Right cardiac atrium (tissue), 5 donors: ENCODE measurements at regions of chr2 and their contacts with region 1.

Region 1: DNA sequence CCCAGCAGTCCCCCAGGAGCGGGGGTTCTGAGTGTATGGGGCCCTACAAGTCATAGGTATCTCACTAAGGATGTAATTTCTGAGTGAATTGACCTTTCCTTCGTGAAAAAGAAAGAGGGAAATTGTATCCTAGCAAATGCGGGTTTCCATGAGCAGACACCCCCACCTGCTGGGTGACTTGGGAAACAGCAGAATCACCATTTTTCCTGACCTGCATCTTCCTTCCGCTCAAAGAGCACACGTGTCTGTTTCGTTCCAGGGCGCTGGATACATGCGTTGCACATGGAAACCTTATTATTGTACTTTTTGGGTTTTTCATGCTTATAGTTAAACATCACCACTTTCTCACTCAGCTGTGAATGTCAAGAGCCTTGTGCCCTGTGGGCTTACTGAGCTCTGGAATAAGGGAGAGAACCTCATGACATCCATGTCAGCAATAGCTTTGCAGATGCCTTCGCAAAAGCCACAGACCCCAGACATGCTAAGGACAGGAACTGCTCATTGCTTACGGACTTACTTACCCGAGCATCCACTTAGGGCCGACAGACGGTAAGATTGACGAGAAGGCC is 132.8 kb downstream of the TPO start:
- DNase-seq: no peak
- ATAC-seq: peak in 1 of 2 donors; percentile 22
- H3K4me3 ChIP-seq: no peak overlapping the region
- H3K27ac ChIP-seq: no peak overlapping the region
- H3K4me1 ChIP-seq: no peaks in the 10 kb centered on the region
- H3K27me3 ChIP-seq: no peaks in the 10 kb centered on the region

Region 2: GRCh38 chr2:714005-714741 is 831.9 kb before region 1 on chr2:
- intact Hi-C with region 1: loop called (anchors 5 to 10 kb)
- DNase-seq: peak in 1 of 3 donors; percentile 49
- ATAC-seq: peak; percentile 47 to 48
- H3K4me3 ChIP-seq: no peak overlapping the region
- H3K27ac ChIP-seq: no peak overlapping the region
- H3K4me1 ChIP-seq: no peaks in the 10 kb centered on the region
- H3K27me3 ChIP-seq: no peaks in the 10 kb centered on the region

Region 3: DNA sequence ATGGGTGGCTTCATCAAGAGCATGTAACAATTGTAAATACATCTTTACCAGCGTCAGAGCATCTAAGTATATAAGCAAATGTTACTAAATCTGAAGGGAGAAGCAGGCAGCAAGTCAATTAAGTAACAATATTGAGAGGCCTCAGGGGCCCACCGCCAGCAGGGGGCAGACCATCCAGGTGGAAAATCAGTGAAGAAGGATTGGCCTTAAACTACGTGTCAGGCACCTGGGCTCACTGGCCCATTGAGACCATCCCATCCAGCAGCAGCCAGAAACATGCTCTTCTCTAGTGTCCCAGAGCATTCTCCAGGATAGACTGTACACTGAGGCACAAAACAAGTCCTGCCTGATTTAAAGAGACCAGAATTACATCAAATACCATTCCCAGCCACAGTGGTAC is 691.6 kb before region 1 on chr2:
- intact Hi-C with region 1: loop called in 3 of 4 experiments (anchors 10 kb)
- DNase-seq: peak in 2 of 3 donors; percentile 32 to 62
- ATAC-seq: peak in 1 of 2 donors; percentile 37
- H3K4me3 ChIP-seq: no peak overlapping the region
- H3K27ac ChIP-seq: no peak overlapping the region
- H3K4me1 ChIP-seq: no peaks in the 10 kb centered on the region
- H3K27me3 ChIP-seq: no peaks in the 10 kb centered on the region

Region 4: DNA sequence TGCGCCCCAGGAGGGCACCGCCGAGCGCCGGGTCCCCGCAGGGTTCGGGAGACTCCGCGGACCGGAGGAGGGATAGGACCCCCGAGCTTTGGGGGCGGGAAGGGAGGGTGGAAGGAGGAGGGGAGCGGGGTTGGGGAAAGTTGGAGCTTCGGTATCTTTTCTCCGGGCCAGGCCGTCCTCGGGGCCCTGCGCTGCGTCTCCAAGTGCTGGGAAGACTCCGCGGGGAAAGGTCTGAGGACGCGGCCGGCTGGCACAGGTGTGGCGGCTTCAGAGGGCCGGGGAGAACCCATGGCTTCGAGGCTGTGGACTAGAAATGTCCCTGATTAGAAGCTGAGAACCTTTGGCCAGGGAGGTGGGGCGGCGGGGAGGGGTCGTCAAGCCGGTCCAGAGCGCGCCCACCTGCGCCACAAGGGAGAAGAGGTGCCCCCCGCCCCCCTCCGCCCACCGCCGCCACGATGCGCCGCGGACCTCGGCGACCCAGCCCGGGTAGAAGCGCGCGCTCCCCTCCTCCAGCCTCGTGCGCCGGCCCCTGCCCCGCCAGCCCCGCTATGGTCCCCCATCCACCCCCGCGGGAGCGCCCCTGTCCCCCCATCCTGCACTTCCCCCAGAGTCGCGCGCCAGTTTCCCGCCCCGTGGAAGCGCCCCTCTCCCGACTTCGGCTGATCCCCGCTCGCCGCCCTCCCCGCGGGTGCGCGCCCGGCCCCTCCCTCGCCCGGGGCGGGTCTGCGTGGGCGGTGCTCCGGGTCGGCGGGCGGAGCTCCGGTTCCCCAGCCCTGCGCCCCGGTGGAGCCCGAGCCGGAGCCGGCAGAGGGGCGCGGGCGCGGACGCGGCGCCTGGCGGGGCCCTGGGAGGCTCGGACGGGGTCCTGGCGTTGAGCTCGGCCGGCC is 595.8 kb before region 1 on chr2 and contains the start of gene SNTG2:
- intact Hi-C with region 1: loop called in 3 of 4 experiments (anchors 5 to 10 kb)
- DNase-seq: peak; percentile 34 to 73 (median 69)
- ATAC-seq: peak; percentile 86 to 95
- H3K4me3 ChIP-seq: peak within 1 kb of the TSS; percentile 70
- H3K27ac ChIP-seq: no peak within 1 kb of the TSS
- H3K4me1 ChIP-seq: no peaks in the 10 kb centered on the region
- H3K27me3 ChIP-seq: no peaks in the 10 kb centered on the region
- total RNA-seq, gene SNTG2: 0.65 to 2.0 (median 1.2) TPM in 3 of 4 donors, not detected in the other

Region 5: GRCh38 chr2:955829-956731 is 590.0 kb before region 1 on chr2:
- intact Hi-C with region 1: loop called in 3 of 4 experiments (anchors 5 to 10 kb)
- DNase-seq: peak in 1 of 3 donors; percentile 54
- ATAC-seq: peak in 1 of 2 donors; percentile 30
- H3K4me3 ChIP-seq: no peak overlapping the region
- H3K27ac ChIP-seq: no peak overlapping the region
- H3K4me1 ChIP-seq: no peaks in the 10 kb centered on the region
- H3K27me3 ChIP-seq: no peaks in the 10 kb centered on the region

Region 6: GRCh38 chr2:1353543-1353942 is 192.6 kb before region 1 on chr2:
- intact Hi-C with region 1: no loop called
- DNase-seq: no peak
- ATAC-seq: no peak
- H3K4me3 ChIP-seq: no peak overlapping the region
- H3K27ac ChIP-seq: no peak overlapping the region
- H3K4me1 ChIP-seq: no peaks in the 10 kb centered on the region
- H3K27me3 ChIP-seq: no peaks in the 10 kb centered on the region